ENCODE measurements at regions of chr12 and their contacts with region 1.

Region 1: GRCh38 chr12:45543906-45544315 is 185.6 kb upstream of the ARID2 start:
- DNase-seq: peak; percentile 58
- H3K4me3 ChIP-seq: no peak overlapping the region
- H3K27ac ChIP-seq: no peak overlapping the region
- H3K4me1 ChIP-seq: no peaks in the 10 kb centered on the region
- H3K27me3 ChIP-seq: no peaks in the 10 kb centered on the region
- CTCF ChIP-seq: peak; percentile 49 to 68 (median 57)
- POLR2A ChIP-seq: no peak

Region 2: DNA sequence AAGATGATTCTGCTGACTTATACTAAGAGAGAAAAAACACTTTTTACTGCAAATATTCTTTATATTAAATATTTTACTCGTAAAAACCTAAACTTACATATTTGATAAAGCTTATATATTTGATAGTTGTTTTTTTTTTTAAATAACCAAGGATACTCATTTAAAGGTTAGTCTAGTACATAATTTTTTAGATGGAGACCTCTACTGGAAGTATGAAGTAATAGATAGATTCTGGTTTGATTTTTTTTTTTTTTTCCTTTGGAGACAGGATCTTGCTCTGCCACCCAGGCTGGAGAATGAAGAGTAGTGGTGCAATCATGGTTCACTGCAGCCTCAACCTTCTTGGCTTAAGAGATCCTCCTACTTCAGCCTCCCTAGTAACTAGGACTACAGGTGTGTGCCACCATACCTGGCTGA is 202.0 kb after region 1 on chr12:
- intact Hi-C with region 1: loop called (anchors 10 kb)
- DNase-seq: no peak
- H3K4me3 ChIP-seq: no peak overlapping the region
- H3K27ac ChIP-seq: no peak overlapping the region
- H3K4me1 ChIP-seq: peaks cover 4% of the 10 kb centered on the region
- H3K27me3 ChIP-seq: no peaks in the 10 kb centered on the region
- CTCF ChIP-seq: peak in 1 of 3 experiments; percentile 32
- POLR2A ChIP-seq: no peak

Measured in testis (tissue), 5 donors.